GM10248 (cell line): ENCODE measurements at regions of chr14 and their contacts with region 1.

Region 1: DNA sequence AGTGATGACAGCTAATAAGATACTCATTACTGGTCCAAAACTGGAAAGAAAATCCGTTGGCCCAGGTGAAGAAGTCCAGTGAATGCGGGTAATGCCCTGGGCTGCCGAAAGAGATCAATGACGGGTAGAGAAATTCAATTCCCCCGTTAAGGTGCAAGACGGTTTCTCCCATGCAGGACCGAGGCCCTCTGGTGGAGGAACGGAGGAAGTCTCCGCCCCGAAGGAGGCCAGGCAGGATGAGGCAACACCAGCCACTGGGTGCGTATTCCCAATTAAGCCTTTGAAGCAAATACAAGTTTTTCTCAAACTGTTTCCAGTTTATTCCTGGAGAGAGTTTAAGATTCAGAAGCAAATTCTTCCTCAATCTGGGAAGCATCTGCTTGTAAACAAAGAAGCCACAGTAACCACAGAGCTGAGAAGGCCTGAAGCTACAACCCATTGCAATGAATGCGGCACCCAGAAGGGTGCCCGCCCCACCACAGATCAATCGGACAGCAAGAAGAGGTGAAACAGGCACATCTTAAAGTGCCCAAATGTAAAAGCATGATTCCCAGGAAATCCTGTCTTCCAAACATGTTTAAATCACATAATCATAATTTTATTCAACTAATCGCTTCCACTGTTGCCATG is 118.5 kb downstream of the TTC7B start:
- DNase-seq: peak; percentile 76
- CTCF ChIP-seq: peak; percentile 92

Region 2: DNA sequence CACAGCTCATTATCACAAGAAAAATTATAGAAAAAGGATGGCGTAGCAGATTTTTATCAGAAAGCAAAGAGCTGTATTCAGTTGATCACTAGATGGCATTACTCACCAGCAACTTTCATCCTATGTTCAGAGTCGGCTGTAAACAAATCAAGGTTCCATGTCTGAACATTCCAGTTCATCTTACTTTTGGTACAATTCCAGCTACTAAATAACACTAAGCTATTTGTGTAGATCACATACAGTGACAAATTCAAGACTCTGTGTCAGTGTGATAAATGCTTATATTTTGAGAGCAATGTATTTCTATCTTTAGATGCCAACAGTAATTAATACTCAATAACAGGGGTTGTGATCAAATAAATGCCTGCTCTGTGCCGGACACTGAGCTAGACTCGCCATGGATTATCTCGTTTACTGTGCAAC is 396.0 kb before region 1 on chr14:
- CTCF ChIA-PET with region 1: interaction called, 13 read pairs
- POLR2A ChIA-PET with region 1: no interaction called
- DNase-seq: no peak
- CTCF ChIP-seq: peak; percentile 41

Region 3: GRCh38 chr14:90399541-90400444 is 297.9 kb before region 1 on chr14:
- CTCF ChIA-PET with region 1: interaction called, 41 read pairs
- POLR2A ChIA-PET with region 1: no interaction called
- DNase-seq: peak; percentile 87
- CTCF ChIP-seq: peak; percentile 100

Region 4: DNA sequence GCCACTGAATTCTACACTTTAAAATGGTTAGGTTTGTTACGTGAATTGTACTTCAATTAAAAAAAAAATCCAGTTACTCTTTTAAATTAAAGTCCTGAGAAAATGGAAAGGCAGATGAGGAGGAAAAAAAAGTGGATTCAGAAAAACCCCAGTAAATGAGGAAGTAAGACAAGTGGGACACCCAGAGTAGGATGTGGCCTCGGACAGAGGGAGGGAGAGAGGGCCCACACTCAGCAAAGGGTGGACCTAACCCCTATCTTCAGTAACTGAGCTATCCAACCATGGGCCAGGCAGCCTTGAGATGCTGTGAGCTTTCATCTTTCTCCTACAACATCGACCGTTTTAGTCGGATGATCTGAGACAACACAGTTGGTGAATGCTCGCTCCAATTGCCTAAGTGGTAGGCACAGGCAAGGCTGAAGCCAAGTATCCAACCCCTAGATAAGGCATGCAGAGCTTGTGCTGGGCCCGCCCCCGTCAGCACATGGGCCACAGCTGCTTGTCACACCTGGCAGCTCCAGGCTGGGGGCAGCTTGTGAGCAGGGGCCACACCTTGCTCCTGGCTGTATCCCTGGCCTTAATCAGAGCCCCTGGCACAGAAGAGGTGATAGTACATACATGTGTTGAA is 23.5 kb before region 1 on chr14:
- CTCF ChIA-PET with region 1: interaction called, 12 read pairs
- POLR2A ChIA-PET with region 1: no interaction called
- DNase-seq: no peak
- CTCF ChIP-seq: no peak

Region 5: DNA sequence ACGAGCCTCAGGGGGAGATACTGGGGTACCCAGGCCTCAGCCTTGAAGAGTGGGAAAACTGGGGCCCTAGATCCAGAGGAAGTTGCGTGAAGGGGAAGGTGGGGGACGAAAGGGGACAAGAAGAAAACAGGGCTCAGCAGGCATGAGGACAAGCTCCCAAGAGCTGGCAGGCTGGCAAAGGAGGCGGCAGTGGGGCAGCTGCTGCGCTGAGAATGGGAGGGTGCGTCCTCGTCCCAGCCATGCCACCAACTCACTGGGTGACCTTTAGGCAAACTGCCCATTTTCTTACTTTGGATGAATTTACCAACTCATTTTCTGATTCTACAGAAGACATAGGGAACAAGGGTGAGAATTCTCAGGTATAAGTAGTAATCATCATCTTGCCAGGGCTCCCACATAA is 15.1 kb before region 1 on chr14:
- CTCF ChIA-PET with region 1: interaction called, 16 read pairs
- POLR2A ChIA-PET with region 1: no interaction called
- DNase-seq: no peak
- CTCF ChIP-seq: no peak

Region 6: GRCh38 chr14:90687680-90688079 is 10.0 kb before region 1 on chr14:
- CTCF ChIA-PET with region 1: interaction called, 16 read pairs
- POLR2A ChIA-PET with region 1: no interaction called
- DNase-seq: no peak
- CTCF ChIP-seq: no peak